ENCODE measurements at regions of chr7 and their contacts with region 1.

Region 1: GRCh38 chr7:111558991-111559390 is 3.3 kb downstream of the IMMP2L start:
- DNase-seq: no peak
- H3K4me3 ChIP-seq: no peak overlapping the region
- H3K27ac ChIP-seq: no peak overlapping the region
- H3K4me1 ChIP-seq: no peaks in the 10 kb centered on the region
- H3K27me3 ChIP-seq: no peaks in the 10 kb centered on the region
- CTCF ChIP-seq: no peak

Region 2: DNA sequence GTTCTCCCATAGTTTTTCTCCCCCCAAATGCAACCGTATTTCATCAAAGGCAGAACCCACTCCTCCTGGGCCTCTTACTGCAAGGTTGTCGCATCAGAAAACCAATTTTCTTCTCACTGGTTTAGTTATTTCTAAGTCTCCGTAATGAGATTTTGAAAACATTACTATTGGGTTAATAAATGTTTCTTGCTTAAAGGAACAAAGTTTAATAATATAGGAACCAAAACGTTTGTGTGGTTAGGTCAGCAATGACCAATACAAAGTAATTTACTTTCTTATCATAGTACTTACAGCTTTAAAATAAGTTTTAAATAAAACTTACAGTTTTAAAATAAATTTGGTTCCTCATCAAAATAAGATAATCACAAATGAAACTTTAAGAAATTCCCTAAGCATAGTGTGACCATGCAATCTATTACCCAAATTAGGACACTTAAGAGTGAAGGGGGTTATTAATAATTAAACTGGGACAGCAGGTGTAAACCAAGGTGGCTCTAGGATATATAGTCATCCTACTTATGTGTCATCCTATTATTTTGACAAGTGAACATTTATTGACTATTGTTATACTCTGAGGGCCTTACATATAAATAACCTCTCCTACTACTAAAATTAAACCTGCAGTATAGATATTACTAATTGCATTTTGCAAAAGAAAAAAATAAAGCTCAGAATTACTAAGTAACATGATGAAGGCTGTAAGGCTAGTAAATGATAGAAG is 883.4 kb before region 1 on chr7:
- intact Hi-C with region 1: no loop called
- DNase-seq: no peak
- H3K4me3 ChIP-seq: no peak overlapping the region
- H3K27ac ChIP-seq: no peak overlapping the region
- H3K4me1 ChIP-seq: no peaks in the 10 kb centered on the region
- H3K27me3 ChIP-seq: no peaks in the 10 kb centered on the region
- CTCF ChIP-seq: no peak

Region 3: GRCh38 chr7:111362506-111363054 is 196.4 kb before region 1 on chr7:
- intact Hi-C with region 1: no loop called
- DNase-seq: no peak
- H3K4me3 ChIP-seq: no peak overlapping the region
- H3K27ac ChIP-seq: no peak overlapping the region
- H3K4me1 ChIP-seq: no peaks in the 10 kb centered on the region
- H3K27me3 ChIP-seq: no peaks in the 10 kb centered on the region
- CTCF ChIP-seq: no peak

Region 4: DNA sequence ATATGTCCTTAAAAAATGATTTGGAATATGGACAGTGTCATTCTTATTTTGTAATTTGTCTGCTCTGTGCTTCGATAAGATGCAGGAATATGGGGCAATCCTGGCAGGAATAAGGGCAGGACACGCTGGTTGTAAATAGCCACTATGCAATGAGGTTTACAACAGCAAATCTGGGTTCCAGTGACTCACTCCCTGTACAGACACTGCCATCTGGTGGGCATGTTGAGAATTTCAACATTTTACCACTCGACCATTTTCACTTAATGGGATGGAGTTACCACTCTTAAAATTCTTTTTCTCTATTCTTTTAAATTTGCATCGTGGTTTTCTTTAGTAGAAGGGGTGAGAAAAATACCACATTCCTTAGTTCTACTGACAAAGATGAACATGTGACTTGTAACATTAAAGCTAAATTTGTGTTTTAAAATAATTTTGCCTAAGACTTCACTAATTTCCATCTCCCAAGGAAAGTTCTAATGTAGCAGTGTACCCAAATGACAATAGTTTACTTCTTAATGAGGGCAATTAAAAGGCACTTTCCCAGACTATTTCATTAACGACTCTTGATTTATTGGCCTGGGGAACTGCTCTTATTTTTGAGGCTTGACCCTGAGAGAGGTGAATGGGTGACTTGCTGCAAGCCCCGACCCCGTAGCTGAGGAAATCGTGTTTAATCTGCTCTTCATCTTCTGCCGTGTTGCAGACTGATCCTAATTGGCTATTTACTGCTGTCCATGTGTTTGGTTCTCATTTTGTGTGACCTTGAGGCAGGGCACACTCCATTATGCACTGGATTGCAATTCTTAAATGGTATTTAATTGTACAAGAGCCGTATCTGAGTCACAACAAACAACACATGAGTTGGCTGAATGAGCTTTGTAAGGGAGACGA is 176.9 kb after region 1 on chr7:
- intact Hi-C with region 1: loop called (anchors 10 kb)
- DNase-seq: peak; percentile 73
- H3K4me3 ChIP-seq: no peak overlapping the region
- H3K27ac ChIP-seq: no peak overlapping the region
- H3K4me1 ChIP-seq: no peaks in the 10 kb centered on the region
- H3K27me3 ChIP-seq: no peaks in the 10 kb centered on the region
- CTCF ChIP-seq: peak; percentile 62

Region 5: GRCh38 chr7:112869111-112869757 is 1310.2 kb after region 1 on chr7:
- intact Hi-C with region 1: no loop called
- DNase-seq: peak; percentile 36
- H3K4me3 ChIP-seq: no peak overlapping the region
- H3K27ac ChIP-seq: no peak overlapping the region
- H3K4me1 ChIP-seq: no peaks in the 10 kb centered on the region
- H3K27me3 ChIP-seq: no peaks in the 10 kb centered on the region
- CTCF ChIP-seq: peak; percentile 58

Measured in colonic mucosa (tissue), 4 donors.